ENCODE measurements at regions of chr18 and their contacts with region 1.

Region 1: DNA sequence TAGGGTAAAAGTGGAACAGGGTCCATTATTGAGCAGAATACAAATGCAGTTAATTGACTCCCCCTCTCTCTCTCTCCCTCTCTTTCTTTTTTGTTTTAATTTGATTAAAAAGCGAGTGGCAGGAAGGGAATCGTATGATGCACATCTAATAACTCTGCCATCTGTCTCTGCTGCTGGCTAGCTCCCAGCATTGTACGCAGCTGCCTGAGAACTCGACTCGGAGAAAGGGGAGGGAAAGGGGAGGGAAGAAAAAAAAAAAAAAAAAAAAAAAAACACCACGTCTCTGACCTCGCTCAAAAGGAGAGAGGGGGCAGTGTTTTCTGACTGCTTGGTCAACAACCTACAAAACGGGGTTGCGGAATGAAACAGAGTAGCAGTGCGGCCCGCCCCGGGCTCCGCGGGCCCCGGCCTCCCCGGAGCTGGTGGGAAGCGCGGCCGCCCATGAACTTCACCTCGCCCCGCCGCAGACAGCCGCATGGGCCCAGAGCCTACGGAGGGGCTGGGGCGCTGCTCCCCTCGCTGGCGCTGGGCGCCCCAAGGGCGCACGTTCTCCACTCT is 265.7 kb downstream of the TCF4 start:
- DNase-seq: peak; percentile 84 to 91
- ATAC-seq: peak; percentile 80 to 94 (median 88)
- H3K4me3 ChIP-seq: peak overlapping the region; percentile 29 to 79 (median 64)
- H3K27ac ChIP-seq: peak overlapping the region; percentile 87 to 98 (median 94)
- H3K4me1 ChIP-seq: peaks cover 2 to 52% (median 37%) of the 10 kb centered on the region in 9 donors
- H3K27me3 ChIP-seq: no peaks in the 10 kb centered on the region
- CTCF ChIP-seq: peak in 6 of 9 donors; percentile 13 to 52 (median 34)

Region 2: GRCh38 chr18:54392543-54393023 is 929.7 kb before region 1 on chr18:
- intact Hi-C with region 1: no loop called
- DNase-seq: no peak
- ATAC-seq: peak in 2 of 8 donors; percentile 34 to 35
- H3K4me3 ChIP-seq: no peak overlapping the region
- H3K27ac ChIP-seq: no peak overlapping the region
- H3K4me1 ChIP-seq: peaks cover 0 to 7% (median 0%) of the 10 kb centered on the region in 9 donors
- H3K27me3 ChIP-seq: no peaks in the 10 kb centered on the region
- CTCF ChIP-seq: peak; percentile 56 to 78 (median 73)

Region 3: DNA sequence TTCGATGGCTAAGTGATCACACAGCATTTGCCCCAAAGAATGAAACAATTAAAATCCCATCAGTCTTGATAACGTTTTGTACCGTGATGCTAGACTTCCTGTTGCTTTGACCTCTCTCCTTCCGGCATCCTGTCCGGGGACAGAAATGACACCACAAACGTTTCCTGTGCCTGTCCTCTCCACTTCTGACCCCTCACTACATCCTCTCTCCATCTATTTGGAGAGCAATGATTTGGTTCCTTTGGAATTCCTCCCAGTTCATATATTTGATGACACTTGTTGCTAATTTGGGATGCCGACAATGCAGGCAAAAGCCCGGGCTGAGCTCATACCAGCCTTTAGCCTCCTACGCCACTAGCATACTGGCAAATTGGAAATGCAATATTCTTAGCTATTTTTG is 211.8 kb before region 1 on chr18:
- intact Hi-C with region 1: loop called in 3 of 10 experiments (anchors 5 to 10 kb)
- DNase-seq: peak; percentile 13 to 58
- ATAC-seq: peak; percentile 86 to 95 (median 93)
- H3K4me3 ChIP-seq: no peak overlapping the region
- H3K27ac ChIP-seq: peak overlapping the region; percentile 32 to 83 (median 71)
- H3K4me1 ChIP-seq: peaks cover 0 to 41% (median 11%) of the 10 kb centered on the region in 9 donors
- H3K27me3 ChIP-seq: no peaks in the 10 kb centered on the region
- CTCF ChIP-seq: no peak

Region 4: GRCh38 chr18:55243857-55244256 is 78.4 kb before region 1 on chr18:
- intact Hi-C with region 1: loop called in 7 of 10 experiments (anchors 2 to 10 kb)
- DNase-seq: peak in 1 of 2 donors; percentile 89
- ATAC-seq: peak; percentile 75 to 91 (median 84)
- H3K4me3 ChIP-seq: peak overlapping the region in 1 of 10 donors; percentile 9
- H3K27ac ChIP-seq: peak overlapping the region; percentile 55 to 89 (median 76)
- H3K4me1 ChIP-seq: peaks cover 21 to 100% (median 80%) of the 10 kb centered on the region in 9 donors
- H3K27me3 ChIP-seq: no peaks in the 10 kb centered on the region
- CTCF ChIP-seq: no peak

Region 5: DNA sequence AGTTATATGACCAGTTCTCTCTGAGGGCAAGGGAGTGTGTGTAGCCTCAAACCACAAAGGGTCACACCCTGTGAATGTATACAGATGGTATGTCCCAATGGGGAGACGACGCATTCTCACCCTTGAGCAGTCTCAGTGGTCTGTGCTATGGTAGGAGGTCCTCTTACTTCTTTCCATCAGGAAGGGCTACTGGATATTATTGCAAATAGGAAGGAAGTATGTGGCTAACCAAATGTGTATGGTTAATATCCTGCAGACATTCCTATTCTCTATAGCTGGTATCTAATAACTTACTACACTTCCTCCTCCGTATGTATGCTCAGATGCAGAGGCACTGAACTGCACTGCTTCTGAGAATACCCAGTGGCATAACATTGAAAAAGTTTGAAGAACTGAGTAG is 56.3 kb before region 1 on chr18:
- intact Hi-C with region 1: loop called in 4 of 10 experiments (anchors 10 kb)
- DNase-seq: no peak
- ATAC-seq: peak in 2 of 8 donors; percentile 12 to 20
- H3K4me3 ChIP-seq: no peak overlapping the region
- H3K27ac ChIP-seq: peak overlapping the region in 6 of 10 donors; percentile 21 to 76 (median 57)
- H3K4me1 ChIP-seq: peaks cover 0 to 79% (median 58%) of the 10 kb centered on the region in 9 donors
- H3K27me3 ChIP-seq: no peaks in the 10 kb centered on the region
- CTCF ChIP-seq: no peak

Region 6: GRCh38 chr18:55415258-55415871 is 93.1 kb after region 1 on chr18:
- intact Hi-C with region 1: loop called in 1 of 10 experiments (anchors 5 kb)
- DNase-seq: peak; percentile 88 to 91
- ATAC-seq: peak; percentile 87 to 93 (median 90)
- H3K4me3 ChIP-seq: no peak overlapping the region
- H3K27ac ChIP-seq: peak overlapping the region in 5 of 10 donors; percentile 14 to 91 (median 54)
- H3K4me1 ChIP-seq: peaks cover 0 to 78% (median 56%) of the 10 kb centered on the region in 9 donors
- H3K27me3 ChIP-seq: no peaks in the 10 kb centered on the region
- CTCF ChIP-seq: peak; percentile 82 to 98 (median 92)